PC-3 (cell line): ENCODE measurements at regions of chr2 and their contacts with region 1.

Region 1: GRCh38 chr2:234430871-234431270 is 66.0 kb downstream of the ARL4C start:
- DNase-seq: no peak
- ATAC-seq: no peak
- H3K4me3 ChIP-seq: no peak overlapping the region
- H3K27ac ChIP-seq: no peak overlapping the region
- H3K4me1 ChIP-seq: peaks cover 8% of the 10 kb centered on the region
- H3K27me3 ChIP-seq: no peaks in the 10 kb centered on the region
- CTCF ChIP-seq: no peak

Region 2: DNA sequence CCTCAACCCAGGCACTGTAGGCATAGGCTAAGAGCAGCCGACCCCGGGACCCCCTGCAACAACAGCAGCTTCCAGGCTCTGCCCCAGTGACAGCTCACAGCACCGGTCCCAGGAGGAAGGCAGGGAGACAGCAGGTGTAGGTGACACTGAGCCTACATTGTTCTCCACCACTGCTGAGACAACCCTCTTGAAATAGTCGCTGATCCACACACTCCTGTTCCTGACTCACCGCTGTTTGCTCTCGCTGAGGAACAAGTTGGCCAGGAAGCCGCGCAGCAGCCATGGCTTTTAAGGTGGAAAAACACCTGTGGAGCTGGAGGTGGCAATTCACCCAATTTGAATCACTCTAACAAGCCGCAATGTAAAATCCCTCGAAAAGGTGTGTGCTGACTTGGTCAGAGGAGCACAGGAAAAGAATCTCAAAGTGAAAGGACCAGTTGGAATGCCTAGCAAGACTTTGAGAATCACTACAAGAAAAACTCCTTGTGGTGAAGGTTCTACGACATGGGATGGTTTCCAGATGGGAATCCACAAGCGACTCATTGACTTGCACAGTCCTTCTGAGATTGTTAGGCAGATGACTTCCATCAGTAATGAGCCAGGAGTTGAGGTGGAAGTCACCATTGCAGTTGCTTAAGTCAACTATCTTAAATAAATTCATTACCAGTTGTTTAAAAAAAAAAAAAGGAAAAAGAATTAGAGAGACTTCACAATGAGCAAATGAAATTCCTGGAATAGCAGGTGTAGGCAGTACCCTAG is 101.5 kb before region 1 on chr2:
- CTCF ChIA-PET with region 1: no interaction called
- POLR2A ChIA-PET with region 1: no interaction called
- intact Hi-C with region 1: no loop called
- DNase-seq: peak; percentile 27
- ATAC-seq: no peak
- H3K4me3 ChIP-seq: no peak overlapping the region
- H3K27ac ChIP-seq: no peak overlapping the region
- H3K4me1 ChIP-seq: no peaks in the 10 kb centered on the region
- H3K27me3 ChIP-seq: no peaks in the 10 kb centered on the region
- CTCF ChIP-seq: no peak

Region 3: GRCh38 chr2:234444890-234445289 is 14.0 kb after region 1 on chr2:
- CTCF ChIA-PET with region 1: no interaction called
- POLR2A ChIA-PET with region 1: interaction called, 13 read pairs
- intact Hi-C with region 1: no loop called
- DNase-seq: no peak
- ATAC-seq: no peak
- H3K4me3 ChIP-seq: no peak overlapping the region
- H3K27ac ChIP-seq: no peak overlapping the region
- H3K4me1 ChIP-seq: no peaks in the 10 kb centered on the region
- H3K27me3 ChIP-seq: no peaks in the 10 kb centered on the region
- CTCF ChIP-seq: no peak